Left lung (tissue), 14 donors: ENCODE measurements at regions of chr9 and their contacts with region 1.

Region 1: DNA sequence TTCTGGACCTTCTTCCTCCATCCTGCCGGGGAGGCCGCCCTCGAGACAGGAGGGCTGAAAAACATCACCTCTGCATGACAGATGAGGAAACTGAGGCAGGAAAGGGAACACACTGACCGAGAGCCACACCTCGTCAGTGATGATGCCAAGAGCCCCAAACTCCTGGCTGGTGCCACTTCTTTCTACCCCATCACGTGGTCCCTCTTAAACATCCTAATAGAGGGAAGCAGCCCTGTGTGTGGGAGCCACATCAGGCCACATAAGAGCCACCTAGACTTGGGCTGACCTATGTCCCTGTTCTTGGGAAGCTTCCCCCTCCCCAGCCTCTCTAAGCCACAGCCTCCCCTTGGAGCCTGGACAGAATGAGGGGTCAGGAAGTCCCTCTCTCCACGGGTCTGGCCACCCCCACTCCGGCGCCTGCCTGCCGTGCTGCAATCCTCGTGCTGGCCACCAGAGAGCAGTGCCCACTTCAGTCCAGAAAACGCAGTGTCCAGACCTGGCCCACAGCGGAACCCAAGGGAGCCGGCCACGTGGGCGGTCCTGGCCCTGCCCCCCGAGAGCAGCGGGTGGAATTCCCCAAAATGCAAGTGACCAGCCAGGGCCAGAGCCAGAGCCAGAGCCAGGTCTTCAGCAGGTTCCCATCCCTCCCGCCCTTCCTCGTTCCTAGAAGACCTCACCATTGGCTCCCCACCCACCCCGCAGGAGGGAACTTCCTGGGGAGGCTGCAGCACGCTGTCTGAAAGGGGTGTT is 54.7 kb upstream of the SARDH start:
- DNase-seq: peak; percentile 62 to 92 (median 79)
- ATAC-seq: peak; percentile 90
- H3K4me3 ChIP-seq: no peak overlapping the region
- H3K27ac ChIP-seq: no peak overlapping the region
- H3K4me1 ChIP-seq: peaks cover 4 to 32% of the 10 kb centered on the region in 2 donors
- H3K27me3 ChIP-seq: no peaks in the 10 kb centered on the region
- CTCF ChIP-seq: peak; percentile 92 to 96

Region 2: GRCh38 chr9:133737774-133738639 is 54.9 kb before region 1 on chr9 and contains the start of gene SARDH:
- intact Hi-C with region 1: no loop called
- DNase-seq: peak; percentile 56 to 87 (median 68)
- ATAC-seq: peak; percentile 77
- H3K4me3 ChIP-seq: peak within 1 kb of the TSS; percentile 21 to 42
- H3K27ac ChIP-seq: no peak within 1 kb of the TSS
- H3K4me1 ChIP-seq: peaks cover 0 to 13% of the 10 kb centered on the region in 2 donors
- H3K27me3 ChIP-seq: peaks cover 0 to 8% of the 10 kb centered on the region in 2 donors
- CTCF ChIP-seq: no peak
- polyA plus RNA-seq, gene SARDH: 9.1 to 13.9 (median 10.9) TPM

Region 3: GRCh38 chr9:133910855-133911514 is 118.1 kb after region 1 on chr9:
- intact Hi-C with region 1: no loop called
- DNase-seq: no peak
- ATAC-seq: peak; percentile 76
- H3K4me3 ChIP-seq: no peak overlapping the region
- H3K27ac ChIP-seq: no peak overlapping the region
- H3K4me1 ChIP-seq: peaks cover 3 to 7% of the 10 kb centered on the region in 2 donors
- H3K27me3 ChIP-seq: no peaks in the 10 kb centered on the region
- CTCF ChIP-seq: no peak

Region 4: DNA sequence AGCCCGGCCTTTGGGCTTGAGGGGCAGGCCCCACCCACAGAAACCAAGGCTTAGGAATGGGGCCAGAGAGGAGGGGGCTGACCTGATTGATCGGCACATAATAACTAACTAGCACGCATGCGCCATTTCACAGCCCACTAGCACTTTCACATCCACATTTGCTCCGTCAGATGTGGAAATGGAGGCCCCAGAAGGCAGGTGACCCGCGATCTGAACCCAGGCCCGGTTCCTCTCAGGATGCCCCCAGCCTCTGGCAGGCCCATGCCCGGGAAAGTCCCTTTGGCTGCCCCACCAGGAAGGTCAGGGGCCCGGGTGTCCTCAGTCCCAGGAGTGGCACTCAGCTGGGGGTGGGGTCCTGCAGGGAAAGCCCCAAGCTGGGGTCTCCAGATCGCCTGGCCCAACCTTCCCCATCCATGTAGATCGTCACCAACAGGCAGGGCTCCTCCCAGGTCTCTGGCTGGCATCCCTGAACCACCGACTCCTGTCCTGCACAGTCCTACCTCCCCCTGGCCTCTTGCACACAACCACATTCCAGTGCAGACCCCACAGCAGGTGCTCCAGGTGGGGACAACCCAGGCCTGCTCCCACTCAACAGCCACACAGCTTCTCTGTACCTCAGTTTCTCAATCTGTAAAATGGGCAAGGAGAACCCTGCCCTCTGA is 152.5 kb after region 1 on chr9:
- intact Hi-C with region 1: no loop called
- DNase-seq: peak in 1 of 4 donors; percentile 67
- ATAC-seq: no peak
- H3K4me3 ChIP-seq: no peak overlapping the region
- H3K27ac ChIP-seq: no peak overlapping the region
- H3K4me1 ChIP-seq: peaks cover 0 to 27% of the 10 kb centered on the region in 2 donors
- H3K27me3 ChIP-seq: no peaks in the 10 kb centered on the region
- CTCF ChIP-seq: no peak

Region 5: GRCh38 chr9:133992780-133993634 is 200.1 kb after region 1 on chr9:
- intact Hi-C with region 1: loop called (anchors 5 to 10 kb)
- DNase-seq: peak; percentile 83 to 90 (median 88)
- ATAC-seq: peak; percentile 86
- H3K4me3 ChIP-seq: peak overlapping the region; percentile 45 to 64
- H3K27ac ChIP-seq: peak overlapping the region; percentile 89 to 90
- H3K4me1 ChIP-seq: peaks cover 14 to 33% of the 10 kb centered on the region in 2 donors
- H3K27me3 ChIP-seq: peaks cover 0 to 40% of the 10 kb centered on the region in 2 donors
- CTCF ChIP-seq: peak in 1 of 2 donors; percentile 11